GM12878 (cell line): ENCODE measurements at regions of chr7 and their contacts with region 1.

Region 1: DNA sequence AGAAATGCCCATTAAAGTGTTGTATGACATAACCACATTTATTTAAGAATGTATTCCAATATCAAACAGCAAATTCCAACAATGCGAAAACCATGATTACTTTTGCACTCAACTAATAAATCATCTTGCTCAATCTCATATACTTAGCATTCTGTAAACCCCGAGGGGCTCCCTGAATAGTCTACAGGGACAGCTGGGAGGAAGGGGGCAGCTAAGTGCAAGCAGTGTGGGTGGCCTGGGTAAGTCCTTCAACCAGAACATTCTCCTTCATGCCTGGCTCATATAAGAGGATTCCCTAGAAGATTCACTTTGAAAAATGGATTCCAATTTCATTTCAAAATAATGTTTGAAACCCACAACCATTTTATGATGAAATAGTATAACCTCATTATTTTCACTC is 355.5 kb downstream of the CDC14C start:
- DNase-seq: no peak
- ATAC-seq: no peak
- H3K4me3 ChIP-seq: no peak overlapping the region
- H3K27ac ChIP-seq: no peak overlapping the region
- H3K4me1 ChIP-seq: no peaks in the 10 kb centered on the region
- H3K27me3 ChIP-seq: no peaks in the 10 kb centered on the region
- CTCF ChIP-seq: no peak
- EP300 ChIP-seq: no peak
- POLR2A ChIP-seq: no peak
- RAD21 ChIP-seq: no peak

Region 2: DNA sequence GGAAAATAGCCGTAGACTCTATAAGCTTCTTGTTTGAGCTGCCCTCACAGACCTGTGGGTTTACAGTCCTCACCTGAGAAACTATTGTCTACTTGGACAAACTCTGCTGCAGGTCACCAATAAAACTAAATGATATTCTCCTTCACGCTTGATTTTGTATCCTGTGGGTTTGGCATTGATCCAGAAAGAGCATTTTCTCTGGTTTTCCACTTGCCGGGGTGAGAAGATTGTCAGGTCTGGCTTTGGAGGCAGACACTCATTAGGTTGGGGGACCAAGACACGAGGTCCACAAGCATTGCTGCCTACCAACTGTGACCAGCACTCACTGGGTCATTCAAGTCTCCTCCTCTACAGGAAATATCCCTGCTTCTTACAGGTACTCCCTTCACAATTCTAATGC is 287.1 kb before region 1 on chr7:
- CTCF ChIA-PET with region 1: no interaction called
- POLR2A ChIA-PET with region 1: no interaction called
- RAD21 ChIA-PET with region 1: no interaction called
- SMC1A ChIA-PET with region 1: no interaction called
- in situ Hi-C with region 1: no loop called
- intact Hi-C with region 1: loop called (anchors 5 kb)
- DNase-seq: no peak
- ATAC-seq: no peak
- H3K4me3 ChIP-seq: no peak overlapping the region
- H3K27ac ChIP-seq: no peak overlapping the region
- H3K4me1 ChIP-seq: no peaks in the 10 kb centered on the region
- H3K27me3 ChIP-seq: no peaks in the 10 kb centered on the region
- CTCF ChIP-seq: no peak
- EP300 ChIP-seq: no peak
- POLR2A ChIP-seq: no peak
- RAD21 ChIP-seq: no peak